Posterior vena cava (tissue), 2 donors: ENCODE measurements at regions of chr2 and their contacts with region 1.

Region 1: GRCh38 chr2:69741619-69742466 is at the start of gene ANXA4:
- DNase-seq: peak; percentile 94
- total RNA-seq, gene ANXA4: 90.8 to 92.2 TPM

Region 2: GRCh38 chr2:69789175-69789721 is 47.4 kb after region 1 on chr2:
- intact Hi-C with region 1: loop called in 1 of 2 experiments (anchors 1 kb)
- DNase-seq: no peak

Region 3: DNA sequence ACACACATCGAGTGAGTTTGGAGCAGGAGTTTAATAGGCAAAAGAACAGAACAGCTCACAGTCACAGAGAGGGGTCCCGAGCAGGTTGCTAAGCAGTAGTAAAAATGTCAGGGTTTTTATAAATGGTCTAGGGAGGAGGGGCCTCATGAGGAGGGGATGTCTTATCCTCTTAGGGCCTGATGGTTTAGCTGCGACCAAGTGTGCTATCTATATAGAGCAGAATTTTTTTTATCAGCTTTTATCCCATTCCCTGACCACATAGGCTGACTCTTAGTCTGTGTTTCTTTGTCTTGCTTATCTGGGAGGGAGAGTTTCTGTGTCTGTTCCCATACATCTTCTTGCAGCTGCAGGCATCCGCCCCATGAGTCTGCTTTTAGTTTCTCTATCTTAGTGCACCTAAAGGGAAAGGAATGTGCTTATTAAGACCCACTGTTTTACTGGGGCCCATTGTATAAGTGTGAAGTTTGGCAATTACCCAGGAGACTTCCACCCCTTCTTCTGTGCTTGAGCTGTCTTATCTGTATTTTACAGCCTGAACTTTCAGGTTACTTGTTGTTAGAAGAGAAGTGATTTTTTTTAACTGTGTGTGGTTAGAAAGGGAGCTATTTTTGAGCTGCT is 57.2 kb after region 1 on chr2:
- intact Hi-C with region 1: loop called in 1 of 2 experiments (anchors 5 kb)
- DNase-seq: no peak